Tibial artery (tissue), 4 donors: ENCODE measurements at regions of chr17 and their contacts with region 1.

Region 1: GRCh38 chr17:55356434-55357328 is 65.0 kb downstream of the MMD start:
- DNase-seq: peak in 1 of 2 donors; percentile 85
- H3K4me3 ChIP-seq: no peak overlapping the region
- H3K27ac ChIP-seq: no peak overlapping the region
- H3K4me1 ChIP-seq: no peaks in the 10 kb centered on the region
- H3K27me3 ChIP-seq: no peaks in the 10 kb centered on the region
- CTCF ChIP-seq: peak; percentile 65 to 71

Region 2: DNA sequence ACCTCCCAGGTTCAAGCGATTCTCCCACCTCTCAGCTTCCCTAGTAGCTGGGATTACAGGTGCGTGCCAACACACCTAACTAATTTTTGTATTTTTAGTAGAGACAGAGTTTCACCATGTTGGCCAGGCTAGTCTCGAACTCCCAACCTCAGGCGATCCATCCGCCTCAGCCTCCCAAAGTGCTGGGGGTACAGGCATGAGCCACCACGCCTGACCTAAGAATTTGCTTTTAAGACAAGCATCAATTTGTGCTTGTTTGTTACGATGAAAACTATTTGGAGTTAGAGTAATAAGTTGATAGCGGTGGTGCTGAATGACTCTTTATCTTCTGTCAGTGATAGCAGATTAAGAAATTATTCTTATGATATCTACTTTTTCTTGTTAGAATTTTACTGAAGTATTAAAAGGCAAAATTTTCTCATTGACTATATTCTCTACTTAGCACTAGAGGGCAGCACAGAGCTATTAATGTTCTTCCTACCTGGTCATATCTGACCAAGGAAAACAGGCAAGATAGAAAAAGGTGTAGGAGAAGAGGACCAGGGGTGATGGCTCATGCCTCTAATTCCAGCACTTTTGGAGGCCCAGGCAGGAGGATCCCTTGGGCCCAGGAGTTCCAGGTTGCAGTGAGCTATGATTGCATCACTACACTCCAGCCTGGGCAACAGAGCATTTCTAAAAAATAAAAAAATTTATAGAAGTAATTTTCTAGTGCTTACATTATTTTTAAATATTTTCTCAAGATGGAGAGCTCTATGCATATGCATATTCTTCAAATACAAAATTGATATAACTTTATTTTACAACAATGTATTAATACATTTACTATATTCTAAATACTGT is 363.7 kb before region 1 on chr17:
- intact Hi-C with region 1: loop called (anchors 5 kb)
- DNase-seq: no peak
- H3K4me3 ChIP-seq: no peak overlapping the region
- H3K27ac ChIP-seq: no peak overlapping the region
- H3K4me1 ChIP-seq: no peaks in the 10 kb centered on the region
- H3K27me3 ChIP-seq: no peaks in the 10 kb centered on the region
- CTCF ChIP-seq: peak; percentile 56 to 69